ENCODE measurements at regions of chr7 and their contacts with region 1.

Region 1: GRCh38 chr7:70040970-70041766 is 442.9 kb downstream of the AUTS2 start:
- DNase-seq: no peak
- ATAC-seq: peak in 1 of 8 donors; percentile 49
- H3K4me3 ChIP-seq: no peak overlapping the region
- H3K27ac ChIP-seq: no peak overlapping the region
- H3K4me1 ChIP-seq: peaks cover 0 to 16% (median 5%) of the 10 kb centered on the region in 9 donors
- H3K27me3 ChIP-seq: no peaks in the 10 kb centered on the region
- CTCF ChIP-seq: peak; percentile 30 to 72 (median 56)

Region 2: GRCh38 chr7:68185631-68186456 is 1855.3 kb before region 1 on chr7:
- intact Hi-C with region 1: loop called in 1 of 10 experiments (anchors 10 kb)
- DNase-seq: no peak
- ATAC-seq: no peak
- H3K4me3 ChIP-seq: no peak overlapping the region
- H3K27ac ChIP-seq: no peak overlapping the region
- H3K4me1 ChIP-seq: no peaks in the 10 kb centered on the region
- H3K27me3 ChIP-seq: no peaks in the 10 kb centered on the region
- CTCF ChIP-seq: no peak

Region 3: DNA sequence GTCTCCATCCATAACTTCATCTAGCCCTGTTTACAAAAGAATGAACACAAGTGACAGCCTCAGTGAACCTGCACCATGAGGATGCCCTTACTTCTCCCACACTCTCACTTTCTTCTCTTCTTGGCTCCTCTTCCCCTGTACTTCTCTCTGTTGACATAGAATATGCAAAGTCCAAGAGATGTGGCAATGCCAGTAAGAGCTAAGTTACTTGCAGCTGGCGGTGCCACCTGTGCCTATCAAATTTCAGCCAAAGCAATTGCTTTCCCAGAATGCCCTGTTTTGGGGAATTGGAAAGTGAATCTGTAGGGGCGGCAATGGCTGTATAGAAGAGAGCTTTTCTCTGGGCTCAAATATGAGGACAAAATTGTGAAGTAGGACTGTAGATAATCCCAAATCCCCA is 114.9 kb after region 1 on chr7:
- intact Hi-C with region 1: loop called in 6 of 10 experiments (anchors 2 to 10 kb)
- DNase-seq: no peak
- ATAC-seq: no peak
- H3K4me3 ChIP-seq: no peak overlapping the region
- H3K27ac ChIP-seq: no peak overlapping the region
- H3K4me1 ChIP-seq: no peaks in the 10 kb centered on the region
- H3K27me3 ChIP-seq: no peaks in the 10 kb centered on the region
- CTCF ChIP-seq: no peak

Region 4: GRCh38 chr7:70165477-70166170 is 124.5 kb after region 1 on chr7:
- intact Hi-C with region 1: loop called in 6 of 10 experiments (anchors 2 to 10 kb)
- DNase-seq: no peak
- ATAC-seq: no peak
- H3K4me3 ChIP-seq: no peak overlapping the region
- H3K27ac ChIP-seq: no peak overlapping the region
- H3K4me1 ChIP-seq: no peaks in the 10 kb centered on the region
- H3K27me3 ChIP-seq: no peaks in the 10 kb centered on the region
- CTCF ChIP-seq: no peak

Region 5: GRCh38 chr7:70693686-70694360 is 652.7 kb after region 1 on chr7:
- intact Hi-C with region 1: loop called in 7 of 10 experiments (anchors 5 kb)
- DNase-seq: peak; percentile 67 to 80
- ATAC-seq: peak; percentile 81 to 92 (median 86)
- H3K4me3 ChIP-seq: peak overlapping the region; percentile 34 to 94 (median 81)
- H3K27ac ChIP-seq: peak overlapping the region; percentile 40 to 84 (median 66)
- H3K4me1 ChIP-seq: peaks cover 0 to 25% (median 16%) of the 10 kb centered on the region in 9 donors
- H3K27me3 ChIP-seq: peaks cover 0 to 45% (median 0%) of the 10 kb centered on the region in 7 donors
- CTCF ChIP-seq: peak in 3 of 9 donors; percentile 25 to 28 (median 26)

Region 6: DNA sequence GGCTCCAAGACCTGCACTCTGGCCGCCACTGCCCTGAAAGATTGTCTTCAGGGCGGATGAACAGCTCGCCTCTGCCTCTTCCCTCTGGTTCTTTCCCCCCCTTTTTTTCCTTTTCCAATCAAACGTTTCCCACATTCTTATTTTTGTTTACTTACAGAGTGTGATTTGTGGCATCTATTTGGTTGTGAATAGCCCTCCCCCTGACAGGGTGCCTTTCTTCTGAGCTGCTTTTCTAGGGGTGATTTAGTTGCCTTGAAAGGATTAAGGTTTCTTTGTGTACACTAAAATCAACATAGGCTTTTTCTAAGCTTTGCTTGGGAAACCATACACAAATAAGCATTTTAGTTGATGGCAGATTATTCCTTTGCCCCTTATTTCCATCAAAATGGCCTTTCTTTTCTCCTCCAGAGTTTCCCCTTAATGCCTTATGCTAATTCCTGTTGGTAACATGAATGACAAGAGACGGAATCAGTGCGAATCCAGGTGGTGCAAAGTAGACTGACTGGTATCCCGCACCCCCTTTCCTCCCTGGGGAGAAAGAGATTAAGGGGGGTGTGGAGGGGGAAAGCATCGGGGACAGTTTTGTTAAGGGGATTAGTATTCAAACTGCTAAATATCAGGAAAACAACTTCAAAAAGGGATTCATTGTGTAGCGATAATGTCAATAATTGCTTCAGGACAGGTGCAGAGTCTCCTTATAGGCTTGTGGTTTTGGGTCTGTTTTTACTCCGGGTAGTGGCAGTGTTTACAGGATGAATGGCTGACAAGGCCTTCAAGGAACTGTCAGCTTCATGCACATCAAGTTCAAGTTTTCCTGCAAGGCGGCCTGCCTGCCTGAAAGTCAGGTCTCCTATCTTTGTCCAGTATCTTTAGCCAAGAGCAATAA is 659.1 kb after region 1 on chr7:
- intact Hi-C with region 1: loop called in 9 of 10 experiments (anchors 2 to 10 kb)
- DNase-seq: no peak
- ATAC-seq: no peak
- H3K4me3 ChIP-seq: no peak overlapping the region
- H3K27ac ChIP-seq: no peak overlapping the region
- H3K4me1 ChIP-seq: peaks cover 0 to 31% (median 8%) of the 10 kb centered on the region in 9 donors
- H3K27me3 ChIP-seq: peaks cover 0 to 25% (median 0%) of the 10 kb centered on the region in 7 donors
- CTCF ChIP-seq: no peak